ENCODE measurements at regions of chr17 and their contacts with region 1.

Region 1: DNA sequence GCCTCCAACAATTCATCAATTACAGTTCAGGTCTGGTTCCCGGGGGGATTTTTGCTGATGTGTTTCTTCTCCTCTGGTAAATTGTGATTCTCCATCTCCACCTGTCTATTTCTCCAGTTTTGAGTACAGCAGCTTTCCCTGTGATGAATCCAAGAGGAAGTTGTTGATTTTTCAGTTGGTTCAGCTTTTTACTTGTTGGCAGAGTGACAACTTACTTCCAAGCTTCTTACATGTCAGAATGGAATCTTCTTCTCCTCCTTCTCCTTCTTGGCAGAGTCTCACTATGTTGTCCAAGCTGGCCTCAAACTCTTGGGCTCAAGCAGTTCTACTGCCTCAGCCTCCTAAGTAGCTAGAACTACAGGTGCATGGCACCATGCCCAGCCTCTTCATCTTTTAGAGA is 33.4 kb upstream of the TMEM92 start:
- DNase-seq: no peak
- ATAC-seq: no peak
- H3K4me3 Mint-ChIP-seq: no peak overlapping the region
- H3K27ac Mint-ChIP-seq: no peak overlapping the region
- H3K4me1 Mint-ChIP-seq: no peaks in the 10 kb centered on the region
- H3K27me3 Mint-ChIP-seq: peaks cover 30% of the 10 kb centered on the region

Region 2: DNA sequence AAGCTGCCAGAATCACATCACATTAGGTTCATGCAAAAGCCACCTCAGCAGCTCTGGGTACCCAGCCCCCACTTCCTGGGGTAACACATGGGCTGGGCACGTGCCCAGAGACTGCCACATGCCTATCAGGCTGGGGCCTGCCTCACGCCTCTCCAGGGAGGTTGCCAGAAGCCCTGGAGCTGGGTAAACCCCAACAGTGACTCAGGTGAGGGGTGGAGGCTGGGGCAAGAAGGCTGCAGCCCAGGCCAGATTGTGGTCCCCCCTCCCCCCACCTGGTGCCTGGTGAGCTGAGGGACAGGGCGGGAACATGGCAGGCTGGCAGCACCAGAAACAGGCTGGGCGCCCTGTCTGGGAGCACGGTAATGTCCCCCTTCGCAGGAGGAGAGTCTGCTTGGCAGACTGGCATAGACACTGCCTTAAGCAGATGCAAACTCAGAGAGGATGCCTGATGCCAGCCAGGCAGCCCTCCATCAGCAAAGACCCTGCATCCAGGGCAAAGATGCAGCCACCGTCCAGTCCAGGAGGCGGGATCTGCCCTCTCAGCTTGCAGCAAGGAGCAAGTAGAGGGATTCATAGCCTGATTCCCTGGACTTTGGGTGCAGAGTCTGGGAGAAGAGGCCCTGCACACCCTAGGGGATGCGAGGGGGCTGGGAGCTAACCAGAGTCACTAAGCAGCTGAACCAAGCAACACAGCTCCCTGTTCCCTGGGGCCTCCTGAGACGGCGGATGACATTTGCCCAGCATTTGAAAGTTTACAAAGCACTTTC is 717.0 kb before region 1 on chr17:
- CTCF ChIA-PET with region 1: no interaction called
- POLR2A ChIA-PET with region 1: no interaction called
- intact Hi-C with region 1: no loop called
- DNase-seq: peak; percentile 81
- ATAC-seq: peak; percentile 99
- H3K4me3 Mint-ChIP-seq: no peak overlapping the region
- H3K27ac Mint-ChIP-seq: peak overlapping the region; percentile 21
- H3K4me1 Mint-ChIP-seq: peaks cover 8% of the 10 kb centered on the region
- H3K27me3 Mint-ChIP-seq: no peaks in the 10 kb centered on the region

Region 3: GRCh38 chr17:50218771-50219315 is 22.0 kb before region 1 on chr17:
- CTCF ChIA-PET with region 1: interaction called, 12 read pairs
- POLR2A ChIA-PET with region 1: no interaction called
- intact Hi-C with region 1: no loop called
- DNase-seq: no peak
- ATAC-seq: no peak
- H3K4me3 Mint-ChIP-seq: no peak overlapping the region
- H3K27ac Mint-ChIP-seq: no peak overlapping the region
- H3K4me1 Mint-ChIP-seq: peaks cover 4% of the 10 kb centered on the region
- H3K27me3 Mint-ChIP-seq: peaks cover 2% of the 10 kb centered on the region

Region 4: GRCh38 chr17:50283246-50283645 is 42.4 kb after region 1 on chr17:
- CTCF ChIA-PET with region 1: no interaction called
- POLR2A ChIA-PET with region 1: no interaction called
- intact Hi-C with region 1: no loop called
- DNase-seq: peak; percentile 74
- ATAC-seq: peak; percentile 80
- H3K4me3 Mint-ChIP-seq: no peak overlapping the region
- H3K27ac Mint-ChIP-seq: no peak overlapping the region
- H3K4me1 Mint-ChIP-seq: peaks cover 13% of the 10 kb centered on the region
- H3K27me3 Mint-ChIP-seq: peaks cover 18% of the 10 kb centered on the region